Endothelial cell of umbilical vein (primary cell): ENCODE measurements at regions of chr16 and their contacts with region 1.

Region 1: GRCh38 chr16:4550591-4550990 is 5.5 kb upstream of the C16orf96 start:
- DNase-seq: no peak
- H3K4me3 ChIP-seq: no peak overlapping the region
- H3K27ac ChIP-seq: no peak overlapping the region
- H3K4me1 ChIP-seq: no peaks in the 10 kb centered on the region
- H3K27me3 ChIP-seq: peaks cover 0 to 2% of the 10 kb centered on the region in 2 experiments
- CTCF ChIP-seq: no peak
- POLR2A ChIP-seq: no peak

Region 2: GRCh38 chr16:4475880-4476788 is 74.5 kb before region 1 on chr16 and contains the start of gene HMOX2:
- CTCF ChIA-PET with region 1: interaction called, 17 read pairs
- POLR2A ChIA-PET with region 1: no interaction called
- dilution Hi-C with region 1: no loop called
- intact Hi-C with region 1: no loop called
- DNase-seq: peak; percentile 95
- H3K4me3 ChIP-seq: peak within 1 kb of the TSS; percentile 37 to 84 (median 71)
- H3K27ac ChIP-seq: peak within 1 kb of the TSS; percentile 75
- H3K4me1 ChIP-seq: peaks cover 19% of the 10 kb centered on the region
- H3K27me3 ChIP-seq: no peaks in the 10 kb centered on the region
- CTCF ChIP-seq: peak; percentile 30 to 64
- POLR2A ChIP-seq: peak; percentile 94
- total RNA-seq, gene HMOX2: 80.7 and 92.6 TPM in 2 replicates

Region 3: GRCh38 chr16:4506450-4506849 is 44.1 kb before region 1 on chr16:
- CTCF ChIA-PET with region 1: interaction called, 109 read pairs
- POLR2A ChIA-PET with region 1: no interaction called
- dilution Hi-C with region 1: no loop called
- intact Hi-C with region 1: loop called (anchors 1 kb)
- DNase-seq: peak; percentile 77
- H3K4me3 ChIP-seq: no peak overlapping the region
- H3K27ac ChIP-seq: no peak overlapping the region
- H3K4me1 ChIP-seq: peaks cover 5% of the 10 kb centered on the region
- H3K27me3 ChIP-seq: no peaks in the 10 kb centered on the region
- CTCF ChIP-seq: peak; percentile 83 to 85
- POLR2A ChIP-seq: no peak

Region 4: GRCh38 chr16:4517812-4518680 is 32.5 kb before region 1 on chr16:
- CTCF ChIA-PET with region 1: interaction called, 42 read pairs
- POLR2A ChIA-PET with region 1: no interaction called
- dilution Hi-C with region 1: no loop called
- intact Hi-C with region 1: loop called (anchors 1 kb)
- DNase-seq: peak; percentile 66
- H3K4me3 ChIP-seq: no peak overlapping the region
- H3K27ac ChIP-seq: no peak overlapping the region
- H3K4me1 ChIP-seq: peaks cover 22% of the 10 kb centered on the region
- H3K27me3 ChIP-seq: no peaks in the 10 kb centered on the region
- CTCF ChIP-seq: peak; percentile 64 to 76
- POLR2A ChIP-seq: no peak

Region 5: DNA sequence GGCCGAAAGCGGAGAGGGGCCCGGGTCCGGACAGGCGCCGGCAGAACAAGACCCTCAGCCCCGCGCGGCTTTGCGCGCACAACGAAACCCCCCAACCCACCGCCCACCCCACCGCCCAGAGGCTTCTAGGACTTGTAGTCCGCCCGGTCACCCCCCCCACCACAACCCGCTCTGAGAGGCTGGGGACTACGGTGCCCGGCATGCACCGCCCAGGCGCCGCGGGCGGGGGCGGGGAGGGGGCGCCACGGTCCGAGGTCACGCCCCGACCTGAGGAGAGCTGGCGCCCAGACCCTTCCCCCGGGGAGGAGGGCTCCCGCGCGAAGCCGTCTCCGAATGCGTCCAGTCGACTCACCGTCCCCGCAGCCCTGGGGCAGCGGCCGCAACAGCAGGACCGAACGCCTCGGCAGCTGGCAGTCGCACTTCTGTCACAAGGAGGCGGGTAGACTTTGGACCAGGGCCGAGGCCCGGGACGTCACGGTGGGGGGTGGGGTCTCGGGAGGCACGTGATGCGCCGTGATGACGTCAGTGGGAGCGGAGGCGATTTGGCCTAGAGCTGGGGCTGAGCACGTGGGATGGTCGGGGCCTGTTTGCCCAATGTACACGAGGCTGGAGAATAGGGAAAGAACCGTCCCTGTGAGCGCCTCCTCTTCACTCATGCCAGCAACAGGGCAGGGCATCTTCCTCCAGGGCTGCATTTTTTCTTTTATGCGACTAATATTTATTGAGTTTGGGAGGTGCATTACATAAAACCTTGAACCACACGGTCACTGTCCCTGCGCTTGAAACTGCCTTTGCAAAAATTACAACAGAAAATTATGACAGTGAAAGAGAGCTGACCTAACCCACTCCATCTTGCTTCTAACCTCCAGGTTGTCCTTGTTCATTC is 12.0 kb before region 1 on chr16 and contains the start of gene CDIP1:
- CTCF ChIA-PET with region 1: interaction called, 12 read pairs
- POLR2A ChIA-PET with region 1: no interaction called
- dilution Hi-C with region 1: no loop called
- intact Hi-C with region 1: no loop called
- DNase-seq: peak; percentile 97
- H3K4me3 ChIP-seq: peak within 1 kb of the TSS; percentile 50 to 60 (median 57)
- H3K27ac ChIP-seq: peak within 1 kb of the TSS; percentile 25
- H3K4me1 ChIP-seq: peaks cover 4% of the 10 kb centered on the region
- H3K27me3 ChIP-seq: peaks cover 0 to 2% of the 10 kb centered on the region in 2 experiments
- CTCF ChIP-seq: peak in 1 of 2 donors; percentile 3
- POLR2A ChIP-seq: peak; percentile 72
- total RNA-seq, gene CDIP1: 22.4 and 33.9 TPM in 2 replicates

Region 6: DNA sequence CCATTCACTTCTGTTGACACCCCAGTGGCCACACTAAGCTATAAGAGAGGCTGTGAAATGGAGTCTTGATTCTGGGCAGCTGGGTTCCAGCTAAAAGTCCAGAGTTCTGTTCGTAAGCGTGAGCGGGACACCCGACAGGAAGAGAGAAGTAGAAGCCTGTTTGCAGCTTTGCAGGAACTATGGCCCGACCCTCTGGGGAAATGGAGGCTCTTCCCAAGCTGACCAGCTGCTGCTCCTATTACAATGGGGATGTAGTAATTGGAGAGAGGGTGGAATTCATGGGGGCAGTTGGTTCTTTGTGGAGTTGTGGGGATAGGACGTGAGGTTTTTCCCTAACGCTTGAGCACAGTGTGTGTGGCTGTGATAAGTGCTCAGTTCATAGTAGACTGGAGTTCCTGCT is 35.7 kb after region 1 on chr16:
- CTCF ChIA-PET with region 1: interaction called, 12 read pairs
- POLR2A ChIA-PET with region 1: no interaction called
- dilution Hi-C with region 1: no loop called
- intact Hi-C with region 1: no loop called
- DNase-seq: no peak
- H3K4me3 ChIP-seq: no peak overlapping the region
- H3K27ac ChIP-seq: no peak overlapping the region
- H3K4me1 ChIP-seq: no peaks in the 10 kb centered on the region
- H3K27me3 ChIP-seq: peaks cover 0 to 9% of the 10 kb centered on the region in 2 experiments
- CTCF ChIP-seq: no peak
- POLR2A ChIP-seq: no peak